SK-N-SH (cell line): ENCODE measurements at regions of chr11 and their contacts with region 1.

Region 1: DNA sequence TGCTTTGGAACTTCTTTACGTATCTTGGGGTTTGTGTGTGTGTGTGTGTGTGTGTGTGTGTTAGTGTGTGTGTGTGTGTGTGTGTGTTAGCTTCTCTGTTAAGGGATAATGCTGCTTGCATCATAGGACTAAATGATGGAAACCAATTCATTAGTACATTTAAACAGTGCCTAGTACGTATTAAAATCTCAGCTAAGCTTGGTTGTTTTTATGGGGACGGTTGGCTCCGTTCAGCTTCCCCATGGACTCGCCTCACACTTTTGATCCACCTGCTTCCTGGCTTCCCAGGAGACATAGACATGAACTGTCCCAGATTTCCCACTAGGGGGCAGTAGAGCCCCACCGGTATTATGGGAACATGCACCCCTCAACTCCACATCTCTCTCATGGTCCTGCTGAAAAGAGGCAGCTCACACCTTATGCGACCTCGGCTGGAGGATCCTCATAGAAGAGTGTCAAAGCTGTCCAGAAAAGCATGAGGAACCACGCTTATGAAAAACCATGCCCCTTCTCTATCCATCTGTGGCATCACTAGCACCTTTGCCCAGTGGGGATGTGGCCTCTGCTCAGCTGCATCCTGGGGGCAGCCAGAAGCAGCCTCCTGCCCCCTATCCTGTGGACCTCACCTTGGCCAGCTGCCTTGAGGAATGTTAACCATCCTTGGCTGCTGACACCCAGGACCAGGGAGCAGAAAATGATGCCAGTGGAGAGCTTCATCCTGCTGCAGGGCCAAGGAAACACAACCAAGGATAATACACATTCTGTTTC is 9.7 kb upstream of the SAAL1 start:
- DNase-seq: peak; percentile 85
- H3K4me3 ChIP-seq: no peak overlapping the region; a peak in 1 of 4 replicates
- H3K27ac ChIP-seq: no peak overlapping the region
- H3K4me1 ChIP-seq: no peaks in the 10 kb centered on the region
- H3K27me3 ChIP-seq: peaks cover 9% of the 10 kb centered on the region; the same call in 1 of the 2 replicates
- CTCF ChIP-seq: peak; percentile 91
- EP300 ChIP-seq: no peak
- RAD21 ChIP-seq: peak; percentile 89

Region 2: GRCh38 chr11:17635551-17635938 is 480.0 kb before region 1 on chr11:
- CTCF ChIA-PET with region 1: no interaction called
- POLR2A ChIA-PET with region 1: no interaction called
- DNase-seq: peak; percentile 19
- H3K4me3 ChIP-seq: no peak overlapping the region
- H3K27ac ChIP-seq: no peak overlapping the region
- H3K4me1 ChIP-seq: no peaks in the 10 kb centered on the region
- H3K27me3 ChIP-seq: no peaks in the 10 kb centered on the region
- CTCF ChIP-seq: no peak; the same call in 1 of the 2 replicates
- EP300 ChIP-seq: no peak
- RAD21 ChIP-seq: no peak

Region 3: DNA sequence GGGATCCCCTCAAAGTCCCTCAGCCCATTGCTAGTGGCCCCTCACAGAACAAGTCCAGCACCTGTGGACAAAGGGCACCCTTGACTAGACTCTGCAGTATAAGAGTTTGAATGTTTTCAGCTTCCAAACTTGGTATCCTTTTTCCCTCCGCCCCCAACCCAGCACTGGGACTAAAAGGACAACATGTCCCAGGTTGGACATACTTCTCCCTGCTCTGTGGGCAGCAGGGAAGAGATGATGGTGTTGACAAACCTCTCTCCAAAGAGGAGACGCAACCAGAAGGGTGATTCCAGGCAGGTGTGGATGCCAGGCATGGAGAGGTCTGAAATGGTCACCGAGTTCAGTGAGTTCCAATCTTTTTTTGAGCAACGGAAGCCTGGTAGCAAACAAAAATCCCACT is 400.7 kb before region 1 on chr11:
- CTCF ChIA-PET with region 1: no interaction called
- POLR2A ChIA-PET with region 1: no interaction called
- DNase-seq: no peak
- H3K4me3 ChIP-seq: no peak overlapping the region
- H3K27ac ChIP-seq: no peak overlapping the region
- H3K4me1 ChIP-seq: no peaks in the 10 kb centered on the region
- H3K27me3 ChIP-seq: peaks cover 34% of the 10 kb centered on the region
- CTCF ChIP-seq: no peak
- EP300 ChIP-seq: no peak
- RAD21 ChIP-seq: no peak

Region 4: DNA sequence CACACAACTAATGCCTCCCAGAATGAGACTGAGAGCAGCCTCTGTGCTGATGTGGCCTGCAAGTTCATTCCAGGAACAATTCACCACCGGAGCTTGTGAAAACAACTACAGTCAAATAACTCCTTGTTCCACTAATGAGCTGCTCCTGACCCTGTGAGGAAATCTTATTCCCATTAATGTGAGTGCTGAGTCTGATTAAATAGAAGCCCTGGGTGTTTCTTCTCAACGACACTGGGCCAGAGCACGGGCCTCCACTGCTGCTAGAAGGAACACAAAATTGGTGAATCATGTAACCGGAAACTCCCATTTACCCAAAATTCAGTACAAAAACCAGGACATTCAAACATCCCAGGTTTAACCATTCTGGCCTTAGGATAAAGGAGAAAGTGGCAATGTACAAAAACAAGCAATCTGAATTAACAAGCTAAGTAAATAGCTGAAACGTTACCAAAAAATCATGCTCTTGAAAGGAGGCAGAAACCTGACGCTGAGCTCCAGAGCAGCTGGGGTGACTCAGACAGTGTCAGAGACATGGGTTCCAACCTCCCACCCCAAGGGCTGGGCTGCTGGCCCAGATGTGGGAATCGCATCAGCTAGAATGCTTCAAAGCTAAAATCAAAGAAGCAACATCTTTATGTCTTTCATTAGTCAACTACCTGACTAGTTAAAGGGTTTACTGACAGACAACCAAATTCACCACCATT is 129.4 kb before region 1 on chr11:
- CTCF ChIA-PET with region 1: interaction called, 13 read pairs
- POLR2A ChIA-PET with region 1: no interaction called
- DNase-seq: no peak
- H3K4me3 ChIP-seq: no peak overlapping the region
- H3K27ac ChIP-seq: peak overlapping the region in 1 of 2 experiments; percentile 22; a peak in 2 of 4 replicates
- H3K4me1 ChIP-seq: peaks cover 5 to 6% of the 10 kb centered on the region in 2 experiments; a peak in 1 of 4 replicates
- H3K27me3 ChIP-seq: no peaks in the 10 kb centered on the region
- CTCF ChIP-seq: no peak
- EP300 ChIP-seq: no peak
- RAD21 ChIP-seq: no peak

Region 5: GRCh38 chr11:18145025-18145424 is 29.5 kb after region 1 on chr11:
- CTCF ChIA-PET with region 1: interaction called, 18 read pairs
- POLR2A ChIA-PET with region 1: no interaction called
- DNase-seq: peak; percentile 18
- H3K4me3 ChIP-seq: no peak overlapping the region
- H3K27ac ChIP-seq: no peak overlapping the region
- H3K4me1 ChIP-seq: no peaks in the 10 kb centered on the region
- H3K27me3 ChIP-seq: peaks cover 8% of the 10 kb centered on the region; the same call in 1 of the 2 replicates
- CTCF ChIP-seq: peak; percentile 48
- EP300 ChIP-seq: no peak
- RAD21 ChIP-seq: peak; percentile 37

Region 6: DNA sequence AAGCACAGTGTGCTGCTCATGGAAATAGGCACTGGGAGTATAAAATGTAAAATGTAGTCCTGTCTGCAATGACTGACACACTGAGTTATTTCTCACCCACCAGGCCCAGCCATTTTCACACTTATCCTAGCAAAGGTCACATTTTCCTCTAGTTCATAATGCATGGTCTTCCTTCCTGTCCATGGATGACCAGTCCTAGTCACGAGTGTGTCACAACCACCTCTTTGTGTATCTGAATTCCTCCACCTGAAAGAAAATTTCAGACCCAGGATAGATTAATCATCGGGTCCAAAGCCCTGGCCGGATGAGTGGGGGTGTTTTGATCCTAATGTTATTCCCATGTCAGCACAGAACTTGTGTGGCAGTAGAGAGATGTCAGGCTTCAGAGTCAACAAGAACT is 57.1 kb after region 1 on chr11 and contains the start of gene MRGPRX4:
- CTCF ChIA-PET with region 1: no interaction called
- POLR2A ChIA-PET with region 1: no interaction called
- DNase-seq: no peak
- H3K4me3 ChIP-seq: no peak within 1 kb of the TSS
- H3K27ac ChIP-seq: no peak within 1 kb of the TSS
- H3K4me1 ChIP-seq: no peaks in the 10 kb centered on the region
- H3K27me3 ChIP-seq: no peaks in the 10 kb centered on the region
- CTCF ChIP-seq: no peak
- EP300 ChIP-seq: no peak
- RAD21 ChIP-seq: no peak
- polyA plus RNA-seq, gene MRGPRX4: not detected in 2 replicates

Region 7: GRCh38 chr11:18243783-18244362 is 128.3 kb after region 1 on chr11:
- CTCF ChIA-PET with region 1: interaction called, 13 read pairs
- POLR2A ChIA-PET with region 1: no interaction called
- DNase-seq: peak; percentile 53
- H3K4me3 ChIP-seq: no peak overlapping the region
- H3K27ac ChIP-seq: no peak overlapping the region
- H3K4me1 ChIP-seq: no peaks in the 10 kb centered on the region
- H3K27me3 ChIP-seq: no peaks in the 10 kb centered on the region; the same call in 1 of the 2 replicates
- CTCF ChIP-seq: peak; percentile 88
- EP300 ChIP-seq: no peak
- RAD21 ChIP-seq: peak; percentile 78

Region 8: DNA sequence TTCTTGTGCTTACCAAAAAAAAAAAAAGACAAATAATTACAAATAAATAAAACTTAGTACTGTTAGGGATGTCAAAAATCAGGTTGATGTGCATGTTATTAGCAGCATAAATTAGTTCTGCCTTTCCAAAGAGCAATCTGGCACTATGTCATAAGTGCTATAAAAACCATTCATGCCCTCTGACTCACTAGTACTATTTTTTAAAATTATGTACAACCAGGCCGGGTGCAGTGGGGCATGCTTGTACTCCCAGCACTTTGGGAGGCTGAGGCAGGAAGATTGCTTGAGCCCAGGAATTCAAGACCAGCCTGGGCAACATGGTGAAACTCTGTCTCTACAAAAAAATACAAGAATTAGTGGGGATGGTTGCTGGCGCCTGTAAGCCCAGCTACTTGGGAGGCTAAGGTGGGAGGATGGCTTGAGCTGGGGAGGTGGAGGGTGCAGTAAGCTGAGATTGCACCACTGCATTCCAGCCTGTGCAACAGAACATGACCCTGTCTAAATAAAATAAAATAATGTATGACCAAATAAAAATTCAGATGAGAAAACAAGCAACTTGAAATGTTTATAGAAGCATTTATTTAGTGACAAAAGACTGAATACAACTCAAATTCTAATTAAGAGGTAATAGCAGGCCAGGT is 447.7 kb after region 1 on chr11:
- CTCF ChIA-PET with region 1: no interaction called
- POLR2A ChIA-PET with region 1: no interaction called
- DNase-seq: no peak
- H3K4me3 ChIP-seq: no peak overlapping the region
- H3K27ac ChIP-seq: no peak overlapping the region
- H3K4me1 ChIP-seq: no peaks in the 10 kb centered on the region
- H3K27me3 ChIP-seq: no peaks in the 10 kb centered on the region
- CTCF ChIP-seq: no peak
- EP300 ChIP-seq: no peak
- RAD21 ChIP-seq: no peak

Region 9: DNA sequence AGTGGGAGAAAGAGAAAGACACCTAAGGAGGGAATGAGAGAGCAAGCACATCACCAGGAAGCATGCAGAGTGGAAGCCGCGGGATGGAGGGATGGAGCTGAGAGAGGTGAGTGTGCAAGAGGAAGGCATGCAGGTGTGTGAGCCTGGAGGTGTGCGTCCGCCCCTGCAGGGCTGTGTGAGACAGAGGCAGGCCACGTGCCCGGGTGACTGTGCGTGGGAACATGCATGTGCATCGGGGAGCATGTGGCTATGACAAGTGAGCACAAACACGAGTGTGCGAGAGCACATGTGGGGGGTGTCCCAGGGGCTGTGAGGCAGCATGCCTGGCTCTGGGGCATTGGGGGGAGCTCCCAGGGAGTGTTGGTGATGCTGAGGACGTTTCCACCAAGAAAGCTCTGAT is 646.2 kb after region 1 on chr11:
- CTCF ChIA-PET with region 1: interaction called, 13 read pairs
- POLR2A ChIA-PET with region 1: no interaction called
- DNase-seq: no peak
- H3K4me3 ChIP-seq: no peak overlapping the region
- H3K27ac ChIP-seq: no peak overlapping the region
- H3K4me1 ChIP-seq: peaks cover 0 to 4% of the 10 kb centered on the region in 2 experiments; a peak in 1 of 4 replicates
- H3K27me3 ChIP-seq: no peaks in the 10 kb centered on the region
- CTCF ChIP-seq: no peak
- EP300 ChIP-seq: no peak
- RAD21 ChIP-seq: no peak